Mammary epithelial cell (primary cell): ENCODE measurements at regions of chr1 and their contacts with region 1.

Region 1: DNA sequence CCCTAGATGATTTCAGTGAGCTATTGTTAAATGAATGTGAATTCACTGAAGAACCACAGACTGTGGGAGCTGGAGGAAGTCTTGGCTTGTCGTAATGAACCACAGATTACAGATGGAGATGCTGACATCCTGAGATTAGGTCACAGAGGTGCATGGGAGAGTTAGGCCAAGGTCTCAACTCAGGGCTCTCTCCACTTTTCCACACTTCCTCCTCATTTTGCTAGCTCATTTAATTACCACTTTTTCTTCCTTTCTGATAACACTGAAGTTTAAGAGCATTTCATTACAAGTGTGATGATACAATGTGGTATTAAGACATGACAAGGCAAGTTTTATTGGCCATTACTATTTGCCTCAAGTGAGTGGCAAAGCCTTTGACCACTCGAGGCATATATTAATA is 30.8 kb downstream of the ST6GALNAC3 start:
- DNase-seq: peak; percentile 46
- H3K4me3 ChIP-seq: no peak overlapping the region
- H3K27ac ChIP-seq: no peak overlapping the region
- H3K4me1 ChIP-seq: no peaks in the 10 kb centered on the region
- H3K27me3 ChIP-seq: peaks cover 2% of the 10 kb centered on the region
- CTCF ChIP-seq: no peak

Region 2: GRCh38 chr1:75916834-75917233 is 188.5 kb before region 1 on chr1:
- CTCF ChIA-PET with region 1: no interaction called
- dilution Hi-C with region 1: loop called (anchors 10 kb)
- in situ Hi-C with region 1: no loop called
- intact Hi-C with region 1: no loop called
- DNase-seq: no peak
- H3K4me3 ChIP-seq: no peak overlapping the region
- H3K27ac ChIP-seq: no peak overlapping the region
- H3K4me1 ChIP-seq: no peaks in the 10 kb centered on the region
- H3K27me3 ChIP-seq: peaks cover 2% of the 10 kb centered on the region
- CTCF ChIP-seq: no peak

Region 3: GRCh38 chr1:76140227-76140626 is 34.9 kb after region 1 on chr1:
- CTCF ChIA-PET with region 1: no interaction called
- dilution Hi-C with region 1: no loop called
- in situ Hi-C with region 1: no loop called
- intact Hi-C with region 1: no loop called
- DNase-seq: no peak
- H3K4me3 ChIP-seq: no peak overlapping the region
- H3K27ac ChIP-seq: no peak overlapping the region
- H3K4me1 ChIP-seq: no peaks in the 10 kb centered on the region
- H3K27me3 ChIP-seq: peaks cover 1% of the 10 kb centered on the region
- CTCF ChIP-seq: no peak